ENCODE measurements at regions of chr1 and their contacts with region 1.

Region 1: GRCh38 chr1:162056043-162056442 is 13.4 kb upstream of the NOS1AP start:
- DNase-seq: peak; percentile 9
- H3K4me3 Mint-ChIP-seq: no peak overlapping the region
- H3K27ac Mint-ChIP-seq: no peak overlapping the region
- H3K4me1 Mint-ChIP-seq: no peaks in the 10 kb centered on the region
- H3K27me3 Mint-ChIP-seq: peaks cover 6% of the 10 kb centered on the region

Region 2: DNA sequence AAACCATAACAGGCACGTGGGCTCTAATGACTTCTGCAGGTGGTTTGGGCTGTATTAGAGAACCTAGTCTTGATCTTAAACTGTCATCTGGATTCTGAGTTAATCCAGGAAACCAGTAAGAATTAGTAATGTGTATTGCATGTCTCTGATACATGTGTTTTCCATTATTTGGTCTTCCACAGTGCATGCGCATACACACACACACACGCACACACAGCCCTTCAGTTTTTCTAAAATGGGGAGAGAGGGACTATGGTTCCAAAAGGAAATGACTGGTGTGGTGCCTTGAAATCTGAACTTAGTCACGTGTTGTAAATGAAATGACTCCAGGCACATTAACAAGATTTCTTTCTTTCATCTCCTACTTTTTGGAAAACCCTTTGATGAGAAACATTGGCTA is 99.9 kb before region 1 on chr1:
- intact Hi-C with region 1: no loop called
- DNase-seq: no peak
- H3K4me3 Mint-ChIP-seq: no peak overlapping the region
- H3K27ac Mint-ChIP-seq: no peak overlapping the region
- H3K4me1 Mint-ChIP-seq: peaks cover 17% of the 10 kb centered on the region
- H3K27me3 Mint-ChIP-seq: no peaks in the 10 kb centered on the region

Region 3: GRCh38 chr1:162177126-162177525 is 121.1 kb after region 1 on chr1:
- intact Hi-C with region 1: no loop called
- DNase-seq: no peak
- H3K4me3 Mint-ChIP-seq: no peak overlapping the region
- H3K27ac Mint-ChIP-seq: no peak overlapping the region
- H3K4me1 Mint-ChIP-seq: no peaks in the 10 kb centered on the region
- H3K27me3 Mint-ChIP-seq: peaks cover 9% of the 10 kb centered on the region

Region 4: GRCh38 chr1:162276493-162276892 is 220.4 kb after region 1 on chr1:
- intact Hi-C with region 1: loop called (anchors 1 kb)
- DNase-seq: no peak
- H3K4me3 Mint-ChIP-seq: no peak overlapping the region
- H3K27ac Mint-ChIP-seq: no peak overlapping the region
- H3K4me1 Mint-ChIP-seq: no peaks in the 10 kb centered on the region
- H3K27me3 Mint-ChIP-seq: peaks cover 16% of the 10 kb centered on the region

Region 5: GRCh38 chr1:162391790-162392563 is 335.9 kb after region 1 on chr1:
- intact Hi-C with region 1: loop called (anchors 1 kb)
- DNase-seq: no peak
- H3K4me3 Mint-ChIP-seq: no peak overlapping the region
- H3K27ac Mint-ChIP-seq: no peak overlapping the region
- H3K4me1 Mint-ChIP-seq: no peaks in the 10 kb centered on the region
- H3K27me3 Mint-ChIP-seq: peaks cover 9% of the 10 kb centered on the region

Measured in activated T-helper 1 cell treated with anti-CD3 and anti-CD28 coated beads, Interleukin-12 subunit alpha, Interleukin-12 subunit beta, Interleukin-2, Interleukin-4 antibody, amounts not matched to agents 30 ng/mL and 10 ng/mL and 1 ng/mL, durations not matched to agents 14 hours and 24 hours and 36 hours (primary cell).